ENCODE measurements at regions of chrX and their contacts with region 1.

Region 1: GRCh38 chrX:151609222-151609621 is 45.7 kb downstream of the PASD1 start:
- DNase-seq: no peak
- ATAC-seq: no peak
- H3K4me3 ChIP-seq: no peak overlapping the region
- H3K4me3 Mint-ChIP-seq: no peak overlapping the region
- H3K27ac ChIP-seq: no peak overlapping the region
- H3K27ac Mint-ChIP-seq: no peak overlapping the region
- H3K4me1 ChIP-seq: no peaks in the 10 kb centered on the region
- H3K4me1 Mint-ChIP-seq: no peaks in the 10 kb centered on the region
- H3K27me3 ChIP-seq: no peaks in the 10 kb centered on the region
- H3K27me3 Mint-ChIP-seq: no peaks in the 10 kb centered on the region
- CTCF ChIP-seq: no peak

Region 2: GRCh38 chrX:151641564-151641963 is 32.3 kb after region 1 on chrX:
- CTCF ChIA-PET with region 1: no interaction called
- POLR2A ChIA-PET with region 1: no interaction called
- intact Hi-C with region 1: loop called in 1 of 2 experiments (anchors 2 kb)
- DNase-seq: no peak
- ATAC-seq: no peak
- H3K4me3 ChIP-seq: no peak overlapping the region
- H3K4me3 Mint-ChIP-seq: no peak overlapping the region
- H3K27ac ChIP-seq: no peak overlapping the region
- H3K27ac Mint-ChIP-seq: no peak overlapping the region
- H3K4me1 ChIP-seq: no peaks in the 10 kb centered on the region
- H3K4me1 Mint-ChIP-seq: no peaks in the 10 kb centered on the region
- H3K27me3 ChIP-seq: no peaks in the 10 kb centered on the region
- H3K27me3 Mint-ChIP-seq: no peaks in the 10 kb centered on the region
- CTCF ChIP-seq: no peak

Measured in CD4-positive, alpha-beta T cell (primary cell).